GM12878 (cell line): ENCODE measurements at regions of chr14 and their contacts with region 1.

Region 1: GRCh38 chr14:76056128-76056527 is 70.6 kb downstream of the IFT43 start:
- DNase-seq: no peak
- ATAC-seq: no peak
- H3K4me3 ChIP-seq: no peak overlapping the region
- H3K27ac ChIP-seq: no peak overlapping the region
- H3K4me1 ChIP-seq: no peaks in the 10 kb centered on the region; the same call in 1 of the 2 replicates
- H3K27me3 ChIP-seq: no peaks in the 10 kb centered on the region
- CTCF ChIP-seq: peak; percentile 26 to 43 (median 33); a peak in 4 of 6 replicates
- EP300 ChIP-seq: no peak
- POLR2A ChIP-seq: no peak
- RAD21 ChIP-seq: no peak

Region 2: DNA sequence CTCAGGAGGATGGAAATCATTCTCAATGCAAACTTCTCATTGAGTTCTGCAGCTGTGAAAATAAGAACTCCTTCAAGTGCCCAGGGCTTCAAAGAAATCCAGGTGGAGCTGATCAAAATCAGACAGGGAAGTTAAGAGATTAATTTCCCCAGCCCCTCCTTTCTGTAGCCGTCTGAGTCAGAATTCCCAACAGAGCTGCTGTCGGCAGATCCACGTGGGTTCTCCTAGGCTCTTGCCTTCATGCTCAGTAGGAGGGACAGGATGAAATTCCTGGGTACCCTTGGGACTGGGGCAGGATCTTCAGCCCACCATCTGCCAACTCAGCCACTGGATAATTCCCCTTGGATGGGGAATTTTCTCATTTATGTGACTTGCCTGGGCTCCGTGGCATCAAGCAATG is 87.7 kb before region 1 on chr14:
- CTCF ChIA-PET with region 1: no interaction called
- POLR2A ChIA-PET with region 1: no interaction called
- RAD21 ChIA-PET with region 1: no interaction called
- SMC1A ChIA-PET with region 1: no interaction called
- in situ Hi-C with region 1: no loop called
- intact Hi-C with region 1: no loop called
- DNase-seq: no peak
- ATAC-seq: no peak
- H3K4me3 ChIP-seq: no peak overlapping the region
- H3K27ac ChIP-seq: no peak overlapping the region
- H3K4me1 ChIP-seq: peaks cover 6% of the 10 kb centered on the region; the same call in 1 of the 2 replicates
- H3K27me3 ChIP-seq: no peaks in the 10 kb centered on the region
- CTCF ChIP-seq: no peak
- EP300 ChIP-seq: no peak
- POLR2A ChIP-seq: no peak
- RAD21 ChIP-seq: no peak

Region 3: DNA sequence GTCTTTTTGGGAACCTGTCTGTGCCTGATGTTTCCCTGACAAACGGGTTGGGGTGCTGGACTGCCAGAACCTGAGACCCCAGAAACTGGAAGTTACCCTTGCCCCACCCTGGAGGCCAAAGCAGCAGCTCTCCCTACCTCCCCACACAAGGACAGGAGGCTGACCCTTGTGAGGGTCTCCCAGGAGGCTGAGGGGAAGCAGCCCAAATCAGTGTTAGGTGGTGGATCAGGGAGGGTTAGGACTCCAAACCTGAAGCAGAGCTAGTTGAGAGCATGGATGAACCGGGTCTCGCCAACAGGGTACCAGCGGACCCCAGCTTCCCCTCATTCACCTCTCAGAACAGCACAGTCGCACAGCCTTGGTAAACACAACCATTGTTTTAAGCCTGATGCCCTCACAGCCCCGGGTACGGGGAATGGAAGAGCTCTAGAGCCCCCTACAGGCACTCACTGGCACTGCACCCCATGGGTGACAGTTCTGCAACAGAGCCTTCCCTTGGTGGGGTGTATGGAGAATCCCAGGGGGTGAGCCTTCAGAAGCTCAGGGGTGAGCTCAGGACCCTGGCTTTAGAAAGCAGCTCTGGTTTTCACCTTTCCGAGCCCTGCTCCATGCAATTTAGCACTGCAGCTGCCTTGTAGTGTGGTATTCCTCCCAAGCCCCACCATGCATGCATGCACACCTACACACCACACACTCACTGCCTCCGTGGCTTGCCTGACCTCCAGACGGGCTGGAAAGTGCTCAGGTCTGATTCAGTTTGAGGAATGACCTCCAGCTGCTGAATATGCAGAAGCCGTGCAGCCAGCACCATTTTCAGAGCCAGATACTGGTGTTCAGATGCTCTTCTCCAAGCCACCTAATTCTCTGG is 331.0 kb after region 1 on chr14:
- CTCF ChIA-PET with region 1: interaction called, 72 read pairs
- POLR2A ChIA-PET with region 1: no interaction called
- RAD21 ChIA-PET with region 1: interaction called, 81 read pairs
- SMC1A ChIA-PET with region 1: interaction called, 60 read pairs
- in situ Hi-C with region 1: loop called (anchors 5 kb)
- intact Hi-C with region 1: loop called (anchors 1 kb)
- DNase-seq: peak; percentile 7
- ATAC-seq: peak; percentile 99
- H3K4me3 ChIP-seq: no peak overlapping the region
- H3K27ac ChIP-seq: no peak overlapping the region
- H3K4me1 ChIP-seq: no peaks in the 10 kb centered on the region
- H3K27me3 ChIP-seq: no peaks in the 10 kb centered on the region
- CTCF ChIP-seq: peak; percentile 99
- EP300 ChIP-seq: no peak
- POLR2A ChIP-seq: no peak
- RAD21 ChIP-seq: peak; percentile 98

Region 4: GRCh38 chr14:76729953-76730505 is 673.9 kb after region 1 on chr14:
- CTCF ChIA-PET with region 1: no interaction called
- POLR2A ChIA-PET with region 1: no interaction called
- RAD21 ChIA-PET with region 1: no interaction called
- SMC1A ChIA-PET with region 1: no interaction called
- in situ Hi-C with region 1: no loop called
- intact Hi-C with region 1: no loop called
- DNase-seq: no peak
- ATAC-seq: no peak
- H3K4me3 ChIP-seq: no peak overlapping the region
- H3K27ac ChIP-seq: no peak overlapping the region
- H3K4me1 ChIP-seq: no peaks in the 10 kb centered on the region
- H3K27me3 ChIP-seq: no peaks in the 10 kb centered on the region; a peak in 1 of 4 replicates
- CTCF ChIP-seq: no peak
- EP300 ChIP-seq: no peak
- POLR2A ChIP-seq: no peak
- RAD21 ChIP-seq: no peak